Mucosa of descending colon (tissue), 3 donors: ENCODE measurements at regions of chr6 and their contacts with region 1.

Region 1: GRCh38 chr6:13336553-13336952 is 8.2 kb upstream of the TBC1D7 start:
- DNase-seq: peak; percentile 66 to 95 (median 90)
- ATAC-seq: peak; percentile 89
- H3K4me3 ChIP-seq: no peak overlapping the region
- H3K4me1 ChIP-seq: no peaks in the 10 kb centered on the region
- CTCF ChIP-seq: peak; percentile 85

Region 2: DNA sequence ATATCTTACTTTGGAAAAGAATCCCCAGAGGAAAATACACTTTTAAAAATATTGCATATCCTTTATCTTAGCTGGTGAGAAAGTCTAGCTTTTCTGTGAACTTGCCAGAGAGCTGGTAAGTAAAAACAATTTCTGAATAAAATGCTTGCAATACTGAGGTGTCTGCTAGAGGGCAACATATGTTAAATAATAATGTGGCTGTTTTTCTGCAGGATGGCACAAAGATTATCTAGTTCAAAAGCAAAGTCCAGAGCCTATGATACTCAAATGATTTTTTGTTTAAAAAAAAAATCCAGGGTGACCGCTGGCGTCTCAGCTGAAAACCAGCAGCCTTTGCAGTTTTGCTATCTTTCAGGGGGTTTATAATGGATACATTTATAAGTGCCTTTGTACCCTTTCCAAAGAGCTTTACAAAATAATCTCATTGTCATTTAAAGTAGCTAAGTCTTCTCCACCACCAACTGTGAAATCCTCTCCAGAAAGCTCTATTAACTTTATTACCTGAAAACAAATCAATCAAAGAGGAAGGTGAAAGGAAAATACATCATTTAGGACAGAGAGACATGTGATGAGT is 425.1 kb before region 1 on chr6:
- intact Hi-C with region 1: loop called in 1 of 2 experiments (anchors 10 kb)
- DNase-seq: peak in 1 of 3 donors; percentile 15
- ATAC-seq: no peak
- H3K4me3 ChIP-seq: no peak overlapping the region
- H3K4me1 ChIP-seq: no peaks in the 10 kb centered on the region
- CTCF ChIP-seq: no peak

Region 3: DNA sequence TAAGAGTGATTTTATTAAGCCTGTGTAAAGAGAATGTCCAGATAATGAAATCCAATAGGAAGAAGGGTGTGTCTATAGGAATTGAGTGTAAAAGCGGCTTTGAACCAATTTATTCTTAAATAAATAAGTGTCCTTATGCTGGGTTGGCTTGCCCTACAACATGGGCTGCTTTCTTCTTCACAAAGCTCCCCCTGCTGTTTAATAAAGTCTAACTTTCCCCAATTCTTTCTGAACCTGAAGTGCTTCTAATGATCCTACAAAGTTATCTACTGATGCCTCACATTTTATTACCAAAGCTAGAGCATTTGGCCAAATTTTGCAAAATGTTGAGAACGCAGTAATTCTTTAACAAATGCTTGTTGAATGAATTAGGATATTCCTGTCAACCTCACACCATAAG is 201.5 kb after region 1 on chr6:
- intact Hi-C with region 1: loop called (anchors 10 kb)
- DNase-seq: no peak
- ATAC-seq: peak; percentile 53
- H3K4me3 ChIP-seq: no peak overlapping the region
- H3K4me1 ChIP-seq: peaks cover 11% of the 10 kb centered on the region
- CTCF ChIP-seq: no peak

Region 4: GRCh38 chr6:13574149-13574570 is 237.6 kb after region 1 on chr6:
- intact Hi-C with region 1: loop called in 1 of 2 experiments (anchors 10 kb)
- DNase-seq: peak; percentile 93 to 96 (median 96)
- ATAC-seq: peak; percentile 94
- H3K4me3 ChIP-seq: peak overlapping the region; percentile 38
- H3K4me1 ChIP-seq: peaks cover 3% of the 10 kb centered on the region
- CTCF ChIP-seq: peak; percentile 19